ENCODE measurements at regions of chr5 and their contacts with region 1.

Region 1: GRCh38 chr5:96934708-96935558 is 947 bp upstream of the LNPEP start:
- DNase-seq: peak; percentile 98
- ATAC-seq: peak; percentile 68
- H3K4me3 ChIP-seq: peak overlapping the region; percentile 65 to 99 (median 90)
- H3K4me3 Mint-ChIP-seq: peak overlapping the region; percentile 95
- H3K27ac ChIP-seq: peak overlapping the region; percentile 88 to 93
- H3K27ac Mint-ChIP-seq: peak overlapping the region; percentile 99
- H3K4me1 ChIP-seq: peaks cover 49 to 58% of the 10 kb centered on the region in 2 donors
- H3K4me1 Mint-ChIP-seq: peaks cover 62% of the 10 kb centered on the region
- H3K27me3 ChIP-seq: no peaks in the 10 kb centered on the region
- H3K27me3 Mint-ChIP-seq: no peaks in the 10 kb centered on the region
- CTCF ChIP-seq: peak; percentile 13

Region 2: GRCh38 chr5:95961617-95962474 is 973.1 kb before region 1 on chr5 and contains the start of gene ELL2:
- CTCF ChIA-PET with region 1: no interaction called
- POLR2A ChIA-PET with region 1: no interaction called
- intact Hi-C with region 1: loop called (anchors 5 kb)
- DNase-seq: peak; percentile 99
- ATAC-seq: peak; percentile 81
- H3K4me3 ChIP-seq: peak within 1 kb of the TSS; percentile 91 to 98 (median 92)
- H3K4me3 Mint-ChIP-seq: peak within 1 kb of the TSS; percentile 99
- H3K27ac ChIP-seq: peak within 1 kb of the TSS; percentile 92 to 99
- H3K27ac Mint-ChIP-seq: peak within 1 kb of the TSS; percentile 97
- H3K4me1 ChIP-seq: peaks cover 21 to 36% of the 10 kb centered on the region in 2 donors
- H3K4me1 Mint-ChIP-seq: peaks cover 47% of the 10 kb centered on the region
- H3K27me3 ChIP-seq: no peaks in the 10 kb centered on the region
- H3K27me3 Mint-ChIP-seq: peaks cover 2% of the 10 kb centered on the region
- CTCF ChIP-seq: no peak
- total RNA-seq, gene ELL2: 27.0 and 31.6 TPM in 2 replicates

Region 3: DNA sequence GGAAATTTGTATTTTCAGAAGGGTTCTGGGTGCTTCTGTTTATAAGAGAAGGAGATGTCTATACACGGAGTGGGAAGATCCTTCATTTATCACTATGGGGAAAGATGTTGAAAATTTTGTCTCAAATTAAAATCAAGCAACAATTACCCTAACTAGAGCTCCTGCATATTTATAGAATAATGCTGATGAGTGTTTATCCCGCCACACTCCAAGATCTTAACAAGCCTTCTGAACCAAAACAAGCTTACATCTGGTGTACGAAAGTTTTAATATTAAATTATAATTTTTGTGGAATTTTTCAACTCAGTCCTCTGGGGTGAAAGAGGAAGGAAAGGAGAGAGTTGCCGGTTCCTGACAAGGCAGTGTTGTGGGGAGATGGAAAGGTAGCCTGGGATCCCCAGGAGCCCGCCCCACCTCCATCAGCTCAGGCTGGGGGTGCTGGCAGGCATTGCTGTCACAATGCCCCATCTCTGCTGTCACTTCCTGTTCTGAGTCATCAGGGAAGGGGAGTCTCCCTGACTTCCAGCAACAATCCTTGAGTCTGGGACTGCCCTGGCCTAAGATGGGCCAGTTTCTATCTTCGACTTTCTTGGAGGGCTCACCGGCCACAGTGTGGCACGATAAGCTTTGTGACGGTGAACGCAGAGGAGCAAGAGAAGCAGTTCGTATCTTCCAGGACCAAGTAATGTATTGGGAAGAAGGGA is 191.7 kb before region 1 on chr5:
- CTCF ChIA-PET with region 1: no interaction called
- POLR2A ChIA-PET with region 1: no interaction called
- intact Hi-C with region 1: no loop called
- DNase-seq: no peak
- ATAC-seq: no peak
- H3K4me3 ChIP-seq: no peak overlapping the region
- H3K4me3 Mint-ChIP-seq: no peak overlapping the region
- H3K27ac ChIP-seq: no peak overlapping the region
- H3K27ac Mint-ChIP-seq: peak overlapping the region; percentile 33
- H3K4me1 ChIP-seq: no peaks in the 10 kb centered on the region
- H3K4me1 Mint-ChIP-seq: no peaks in the 10 kb centered on the region
- H3K27me3 ChIP-seq: no peaks in the 10 kb centered on the region
- H3K27me3 Mint-ChIP-seq: no peaks in the 10 kb centered on the region
- CTCF ChIP-seq: no peak

Region 4: GRCh38 chr5:96868603-96869371 is 66.1 kb before region 1 on chr5:
- CTCF ChIA-PET with region 1: interaction called, 24 read pairs
- POLR2A ChIA-PET with region 1: interaction called, 5 read pairs
- intact Hi-C with region 1: loop called (anchors 1 kb)
- DNase-seq: peak; percentile 77
- ATAC-seq: peak; percentile 84
- H3K4me3 ChIP-seq: no peak overlapping the region
- H3K4me3 Mint-ChIP-seq: no peak overlapping the region
- H3K27ac ChIP-seq: no peak overlapping the region
- H3K27ac Mint-ChIP-seq: peak overlapping the region; percentile 4
- H3K4me1 ChIP-seq: peaks cover 31 to 37% of the 10 kb centered on the region in 2 donors
- H3K4me1 Mint-ChIP-seq: peaks cover 46% of the 10 kb centered on the region
- H3K27me3 ChIP-seq: no peaks in the 10 kb centered on the region
- H3K27me3 Mint-ChIP-seq: no peaks in the 10 kb centered on the region
- CTCF ChIP-seq: peak; percentile 93

Region 5: DNA sequence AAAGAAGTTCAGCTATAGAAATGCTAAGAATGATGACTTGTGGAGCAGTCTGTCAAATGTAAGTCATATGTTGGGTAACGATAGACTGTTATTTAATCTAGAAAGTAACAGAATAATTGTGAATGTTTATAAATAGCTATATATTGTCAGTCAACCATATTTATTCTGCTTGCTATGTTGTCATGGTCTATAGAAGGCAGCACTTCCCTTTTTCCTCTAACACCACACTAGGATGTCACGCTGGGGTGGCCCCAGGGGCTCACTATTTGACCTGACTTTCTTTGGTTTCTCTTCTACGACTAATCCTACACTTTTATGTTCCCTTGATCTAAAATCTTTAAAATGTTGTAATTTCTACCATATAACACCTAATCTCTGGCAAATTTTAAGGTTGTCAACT is 38.1 kb before region 1 on chr5:
- CTCF ChIA-PET with region 1: interaction called, 8 read pairs
- POLR2A ChIA-PET with region 1: interaction called, 15 read pairs
- intact Hi-C with region 1: loop called (anchors 1 kb)
- DNase-seq: peak; percentile 86
- ATAC-seq: peak; percentile 97
- H3K4me3 ChIP-seq: peak overlapping the region; percentile 24 to 65 (median 45)
- H3K4me3 Mint-ChIP-seq: peak overlapping the region; percentile 80
- H3K27ac ChIP-seq: peak overlapping the region; percentile 96 to 98
- H3K27ac Mint-ChIP-seq: peak overlapping the region; percentile 85
- H3K4me1 ChIP-seq: peaks cover 16 to 18% of the 10 kb centered on the region in 2 donors
- H3K4me1 Mint-ChIP-seq: peaks cover 32% of the 10 kb centered on the region
- H3K27me3 ChIP-seq: no peaks in the 10 kb centered on the region
- H3K27me3 Mint-ChIP-seq: no peaks in the 10 kb centered on the region
- CTCF ChIP-seq: no peak

Region 6: GRCh38 chr5:96963267-96963666 is 28.3 kb after region 1 on chr5:
- CTCF ChIA-PET with region 1: interaction called, 6 read pairs
- POLR2A ChIA-PET with region 1: interaction called, 10 read pairs
- intact Hi-C with region 1: loop called (anchors 1 kb)
- DNase-seq: peak; percentile 31
- ATAC-seq: peak; percentile 50
- H3K4me3 ChIP-seq: no peak overlapping the region
- H3K4me3 Mint-ChIP-seq: peak overlapping the region; percentile 60
- H3K27ac ChIP-seq: peak overlapping the region in 1 of 2 donors; percentile 86
- H3K27ac Mint-ChIP-seq: peak overlapping the region; percentile 63
- H3K4me1 ChIP-seq: peaks cover 41 to 60% of the 10 kb centered on the region in 2 donors
- H3K4me1 Mint-ChIP-seq: peaks cover 76% of the 10 kb centered on the region
- H3K27me3 ChIP-seq: no peaks in the 10 kb centered on the region
- H3K27me3 Mint-ChIP-seq: no peaks in the 10 kb centered on the region
- CTCF ChIP-seq: no peak

Region 7: DNA sequence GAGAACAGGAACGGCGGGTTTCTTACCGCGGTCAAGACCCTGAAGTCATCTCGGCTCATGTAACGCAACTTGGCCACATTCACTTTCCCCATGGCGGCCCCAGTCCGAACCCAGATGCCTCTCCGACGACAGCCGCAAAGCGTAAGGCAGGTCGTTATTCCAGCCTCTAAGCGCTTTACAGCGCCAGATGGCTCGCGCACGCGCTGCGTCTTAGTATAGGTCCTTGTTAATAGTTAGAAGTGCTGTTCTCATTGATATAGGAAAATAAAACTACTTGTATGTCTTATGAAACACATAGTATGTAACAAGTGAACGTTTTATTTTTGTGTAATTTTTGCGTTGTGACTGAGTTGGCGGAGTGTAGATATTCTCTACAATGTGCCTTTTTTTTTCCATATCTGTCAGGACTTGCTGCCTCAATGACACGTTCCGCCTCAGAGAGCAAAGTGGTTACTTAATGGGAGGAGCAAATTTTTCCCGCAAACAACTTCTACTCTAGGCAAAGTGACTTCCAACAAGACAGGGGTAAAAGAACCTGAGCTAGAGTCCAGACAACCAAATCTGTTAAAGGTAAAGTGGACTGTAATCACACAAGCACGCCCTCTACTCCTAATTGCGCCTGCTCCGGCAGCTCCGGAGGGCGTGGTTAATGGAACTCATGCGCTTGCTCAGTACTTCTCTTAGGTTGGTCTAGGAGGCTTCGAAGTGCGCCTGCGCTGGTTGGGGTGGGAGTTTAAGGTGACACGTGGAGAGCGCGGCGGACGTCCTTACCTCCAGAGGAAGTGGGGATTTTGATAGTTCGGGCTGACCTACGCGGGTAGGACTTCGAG is 248.4 kb after region 1 on chr5 and contains the start of gene RIOK2:
- CTCF ChIA-PET with region 1: no interaction called
- POLR2A ChIA-PET with region 1: no interaction called
- intact Hi-C with region 1: loop called (anchors 1 kb)
- DNase-seq: peak; percentile 93
- ATAC-seq: peak; percentile 87
- H3K4me3 ChIP-seq: peak within 1 kb of the TSS; percentile 68 to 96 (median 88)
- H3K4me3 Mint-ChIP-seq: peak within 1 kb of the TSS; percentile 97
- H3K27ac ChIP-seq: peak within 1 kb of the TSS; percentile 91 to 99
- H3K27ac Mint-ChIP-seq: peak within 1 kb of the TSS; percentile 100
- H3K4me1 ChIP-seq: peaks cover 12 to 15% of the 10 kb centered on the region in 2 donors
- H3K4me1 Mint-ChIP-seq: peaks cover 33% of the 10 kb centered on the region
- H3K27me3 ChIP-seq: no peaks in the 10 kb centered on the region
- H3K27me3 Mint-ChIP-seq: no peaks in the 10 kb centered on the region
- CTCF ChIP-seq: no peak
- total RNA-seq, gene RIOK2: 32.8 and 37.2 TPM in 2 replicates